AG04449 (cell line): ENCODE measurements at regions of chr13 and their contacts with region 1.

Region 1: GRCh38 chr13:79679334-79679733 is 198.4 kb downstream of the NDFIP2 start:
- DNase-seq: no peak
- H3K4me3 ChIP-seq: no peak overlapping the region
- CTCF ChIP-seq: peak; percentile 67

Region 2: DNA sequence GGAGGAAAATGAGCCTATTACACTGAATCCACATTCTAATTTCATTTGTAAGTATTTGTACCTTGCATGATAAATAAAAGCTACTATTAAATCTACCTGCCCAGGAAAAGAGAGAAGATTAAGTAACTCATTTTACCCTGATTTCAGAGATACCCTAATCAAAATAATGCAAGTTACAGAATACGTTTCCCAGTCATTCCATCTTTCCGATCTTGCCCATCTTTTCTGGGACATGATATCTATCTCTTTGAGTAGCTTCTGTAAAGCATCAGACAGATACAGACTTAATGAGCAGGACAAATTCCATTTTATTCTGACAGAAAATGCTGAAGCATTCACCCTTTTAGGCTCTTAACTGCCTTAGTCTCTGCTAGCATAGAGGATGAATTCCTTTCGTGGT is 605.0 kb after region 1 on chr13:
- CTCF ChIA-PET with region 1: no interaction called
- POLR2A ChIA-PET with region 1: no interaction called
- DNase-seq: no peak
- H3K4me3 ChIP-seq: no peak overlapping the region
- CTCF ChIP-seq: no peak

Region 3: DNA sequence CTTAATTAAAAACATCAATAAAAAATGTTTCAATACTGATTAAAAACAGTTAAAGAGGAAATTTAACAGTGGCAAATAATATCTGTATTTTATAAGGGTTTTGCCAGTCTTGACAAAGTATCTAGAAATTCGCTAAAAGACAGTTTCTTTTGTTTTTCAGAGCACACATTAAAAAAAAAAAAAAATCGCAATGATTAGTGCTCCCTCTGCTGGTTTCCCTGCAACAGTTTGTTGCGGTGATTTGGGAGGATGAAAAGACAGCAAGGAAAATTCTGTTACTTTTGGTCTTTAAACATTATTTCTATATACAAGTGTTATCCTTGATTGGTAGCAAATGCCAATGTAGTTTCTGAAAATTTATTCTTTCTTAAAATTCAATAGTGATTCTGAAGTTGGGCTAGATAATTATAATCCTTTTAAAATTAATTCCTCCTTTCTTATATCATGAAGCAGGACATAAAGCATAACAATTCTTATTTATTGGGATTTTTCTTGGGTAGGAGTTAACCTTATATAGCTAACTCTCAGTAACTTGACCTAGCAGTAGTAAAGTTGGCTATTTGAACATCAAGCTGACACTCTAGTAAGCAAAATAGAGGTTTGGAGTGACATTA is 684.7 kb after region 1 on chr13:
- CTCF ChIA-PET with region 1: interaction called, 31 read pairs
- POLR2A ChIA-PET with region 1: no interaction called
- DNase-seq: no peak
- H3K4me3 ChIP-seq: no peak overlapping the region
- CTCF ChIP-seq: peak; percentile 60

Region 4: DNA sequence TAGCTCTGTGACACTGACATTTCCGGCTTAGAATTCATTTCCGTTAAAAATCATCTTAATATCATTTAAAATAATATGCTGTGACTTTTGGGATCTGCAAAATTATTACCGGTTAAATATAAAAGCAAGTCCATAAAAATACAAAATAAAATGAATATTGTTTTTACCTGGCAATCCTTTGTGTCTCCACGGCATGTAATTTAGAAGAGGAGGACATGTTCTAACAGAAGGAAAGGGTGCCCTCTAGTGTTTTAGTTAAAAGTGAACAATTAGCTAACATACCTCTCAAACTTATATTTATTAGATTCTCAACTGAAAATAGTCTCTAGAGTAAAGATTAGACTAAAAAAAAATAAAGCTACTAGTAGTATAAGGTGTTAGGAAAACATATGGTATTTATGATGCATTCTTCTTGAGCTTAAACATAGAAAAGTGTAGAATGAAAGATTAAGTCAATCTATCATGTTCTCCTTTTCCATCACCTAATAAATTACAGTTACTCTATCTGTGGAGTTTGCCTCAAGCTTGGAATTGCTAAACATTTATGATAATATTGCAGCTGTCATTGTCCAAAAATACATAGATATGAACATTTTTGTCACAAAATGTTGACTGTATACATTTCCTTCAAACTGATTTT is 1338.3 kb after region 1 on chr13:
- CTCF ChIA-PET with region 1: interaction called, 16 read pairs
- POLR2A ChIA-PET with region 1: no interaction called
- DNase-seq: no peak
- H3K4me3 ChIP-seq: no peak overlapping the region
- CTCF ChIP-seq: peak; percentile 17